OCI-LY7 (cell line): ENCODE measurements at regions of chr7 and their contacts with region 1.

Region 1: GRCh38 chr7:26090927-26091519 is 61.0 kb upstream of the NFE2L3 start:
- DNase-seq: peak; percentile 76
- H3K4me3 ChIP-seq: peak overlapping the region; percentile 9
- H3K27ac ChIP-seq: no peak overlapping the region
- H3K4me1 ChIP-seq: peaks cover 15% of the 10 kb centered on the region
- CTCF ChIP-seq: peak; percentile 98

Region 2: GRCh38 chr7:25512061-25512687 is 578.8 kb before region 1 on chr7:
- CTCF ChIA-PET with region 1: no interaction called
- POLR2A ChIA-PET with region 1: no interaction called
- intact Hi-C with region 1: no loop called
- DNase-seq: no peak
- H3K4me3 ChIP-seq: no peak overlapping the region
- H3K27ac ChIP-seq: no peak overlapping the region
- H3K4me1 ChIP-seq: no peaks in the 10 kb centered on the region
- CTCF ChIP-seq: no peak

Region 3: DNA sequence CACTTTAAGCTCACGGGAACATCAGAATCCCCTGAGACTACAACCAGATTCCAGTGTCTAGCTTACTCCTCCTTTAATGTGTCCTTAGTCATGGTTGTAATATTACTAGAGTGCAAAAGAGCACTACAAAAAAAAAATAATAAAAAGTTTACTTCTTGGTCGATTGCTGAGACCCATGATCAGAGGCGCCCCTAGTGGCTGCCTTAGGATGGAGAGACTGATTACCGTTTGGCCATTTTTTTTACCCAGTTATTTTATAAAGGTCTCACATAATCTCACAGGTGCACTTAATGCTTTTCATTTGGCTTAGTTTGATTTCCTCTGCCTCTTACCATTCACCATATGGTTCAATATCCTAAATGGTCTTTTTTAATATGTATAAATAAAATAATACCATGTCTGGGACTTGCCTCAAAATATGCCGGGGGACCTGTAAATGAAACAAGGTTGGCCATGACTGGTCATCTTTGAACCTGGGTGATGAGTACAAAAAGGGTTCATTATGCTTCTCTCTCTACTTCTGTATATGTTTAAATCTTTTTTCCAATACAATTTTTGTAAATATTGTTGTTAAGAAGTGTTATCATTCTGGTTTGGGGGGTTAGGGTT is 270.5 kb before region 1 on chr7:
- CTCF ChIA-PET with region 1: no interaction called
- POLR2A ChIA-PET with region 1: no interaction called
- intact Hi-C with region 1: no loop called
- DNase-seq: peak; percentile 64
- H3K4me3 ChIP-seq: peak overlapping the region; percentile 37
- H3K27ac ChIP-seq: peak overlapping the region; percentile 83
- H3K4me1 ChIP-seq: peaks cover 68% of the 10 kb centered on the region
- CTCF ChIP-seq: peak; percentile 98

Region 4: GRCh38 chr7:26151953-26152781 is 61.1 kb after region 1 on chr7 and contains the start of gene NFE2L3:
- CTCF ChIA-PET with region 1: no interaction called
- POLR2A ChIA-PET with region 1: interaction called, 6 read pairs
- intact Hi-C with region 1: loop called (anchors 2 kb)
- DNase-seq: peak; percentile 92
- H3K4me3 ChIP-seq: peak within 1 kb of the TSS; percentile 73
- H3K27ac ChIP-seq: peak within 1 kb of the TSS; percentile 30
- H3K4me1 ChIP-seq: peaks cover 44% of the 10 kb centered on the region
- CTCF ChIP-seq: 0 out of 2 replicates have a peak, but pooled peaks have one; percentile 18
- total RNA-seq, gene NFE2L3: 10.7 and 13.3 TPM in 2 replicates

Region 5: DNA sequence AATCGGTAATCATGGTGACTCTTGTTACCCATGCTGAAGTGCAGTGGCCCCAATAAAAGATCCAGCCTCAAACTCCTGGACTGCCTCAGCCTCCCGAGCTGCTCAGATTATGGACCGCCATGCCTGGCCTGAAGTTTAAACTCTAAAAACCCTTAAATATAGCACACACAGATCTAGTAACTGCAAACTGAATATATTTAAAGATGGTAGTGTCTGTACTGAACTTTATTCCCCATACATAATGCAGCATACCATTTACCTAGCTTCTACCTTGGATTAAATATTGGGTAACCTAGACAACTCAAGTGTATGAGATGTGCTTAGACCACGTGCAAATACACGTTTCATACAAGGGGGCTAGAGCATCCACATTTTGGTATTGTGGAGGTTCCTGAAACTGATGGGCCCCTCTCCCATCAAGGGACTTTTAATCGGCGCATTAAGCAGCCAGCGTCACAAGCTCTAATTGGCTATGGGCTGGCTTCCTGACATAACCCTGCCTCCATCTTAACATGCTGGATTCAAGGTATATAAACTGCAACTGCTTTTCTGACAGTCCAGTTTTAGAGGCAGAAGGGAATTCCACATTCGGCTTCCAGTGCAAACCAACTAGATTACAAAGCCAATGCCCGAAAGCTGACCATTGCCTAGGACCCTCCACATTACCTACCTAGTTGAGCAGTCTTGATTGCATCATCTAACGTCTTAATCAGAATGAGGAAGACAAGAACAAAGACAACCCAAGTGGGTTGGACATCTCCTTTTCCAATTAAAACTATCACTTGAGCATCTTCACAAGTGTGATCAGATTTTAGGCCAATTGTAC is 96.6 kb after region 1 on chr7:
- CTCF ChIA-PET with region 1: no interaction called
- POLR2A ChIA-PET with region 1: interaction called, 11 read pairs
- intact Hi-C with region 1: loop called (anchors 5 kb)
- DNase-seq: peak; percentile 43
- H3K4me3 ChIP-seq: no peak overlapping the region
- H3K27ac ChIP-seq: peak overlapping the region; percentile 60
- H3K4me1 ChIP-seq: peaks cover 26% of the 10 kb centered on the region
- CTCF ChIP-seq: no peak

Region 6: DNA sequence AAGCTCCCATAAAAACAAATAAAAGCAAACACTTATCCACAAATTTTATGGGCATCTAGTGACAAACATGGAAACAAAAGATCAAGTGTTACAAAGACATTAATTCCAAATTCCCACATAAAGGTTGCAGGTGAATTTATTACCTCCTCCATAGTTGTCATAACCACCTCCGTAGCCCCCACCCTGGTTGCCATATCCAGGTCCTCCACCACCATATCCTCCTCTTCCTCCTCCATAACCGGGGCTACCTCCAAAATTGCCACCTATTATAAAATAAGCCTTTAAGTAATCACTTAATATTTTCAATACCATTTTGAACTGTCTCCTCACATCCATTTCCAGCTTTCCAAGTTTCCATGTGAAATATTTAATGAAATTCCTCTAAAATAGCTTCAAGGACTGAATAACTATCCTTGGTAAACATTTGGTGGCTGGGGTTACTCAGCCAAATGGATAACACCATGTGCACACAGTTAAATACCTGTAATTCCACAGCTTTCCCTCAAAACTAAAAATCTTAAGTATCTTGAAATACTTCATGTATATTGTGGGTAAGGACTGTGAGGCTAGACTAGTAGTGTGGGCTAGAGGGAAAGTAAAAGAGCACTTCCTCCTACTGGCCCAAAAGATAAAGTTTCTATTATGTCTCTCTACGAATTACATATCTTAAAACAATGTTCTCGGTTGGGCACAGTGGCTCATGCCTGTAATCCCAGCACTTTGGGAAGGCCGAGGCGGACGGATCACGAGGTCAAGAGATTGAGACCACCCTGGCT is 102.6 kb after region 1 on chr7:
- CTCF ChIA-PET with region 1: interaction called, 3 read pairs
- POLR2A ChIA-PET with region 1: interaction called, 11 read pairs
- intact Hi-C with region 1: loop called (anchors 2 kb)
- DNase-seq: no peak
- H3K4me3 ChIP-seq: no peak overlapping the region
- H3K27ac ChIP-seq: no peak overlapping the region
- H3K4me1 ChIP-seq: peaks cover 63% of the 10 kb centered on the region
- CTCF ChIP-seq: no peak

Region 7: GRCh38 chr7:26291699-26292538 is 200.9 kb after region 1 on chr7 and contains the start of gene SNX10:
- CTCF ChIA-PET with region 1: no interaction called
- POLR2A ChIA-PET with region 1: interaction called, 3 read pairs
- intact Hi-C with region 1: loop called (anchors 5 kb)
- DNase-seq: peak; percentile 91
- H3K4me3 ChIP-seq: peak within 1 kb of the TSS; percentile 99
- H3K27ac ChIP-seq: peak within 1 kb of the TSS; percentile 74
- H3K4me1 ChIP-seq: peaks cover 37% of the 10 kb centered on the region
- CTCF ChIP-seq: peak; percentile 75
- total RNA-seq, gene SNX10: 14.3 and 14.5 TPM in 2 replicates

Region 8: DNA sequence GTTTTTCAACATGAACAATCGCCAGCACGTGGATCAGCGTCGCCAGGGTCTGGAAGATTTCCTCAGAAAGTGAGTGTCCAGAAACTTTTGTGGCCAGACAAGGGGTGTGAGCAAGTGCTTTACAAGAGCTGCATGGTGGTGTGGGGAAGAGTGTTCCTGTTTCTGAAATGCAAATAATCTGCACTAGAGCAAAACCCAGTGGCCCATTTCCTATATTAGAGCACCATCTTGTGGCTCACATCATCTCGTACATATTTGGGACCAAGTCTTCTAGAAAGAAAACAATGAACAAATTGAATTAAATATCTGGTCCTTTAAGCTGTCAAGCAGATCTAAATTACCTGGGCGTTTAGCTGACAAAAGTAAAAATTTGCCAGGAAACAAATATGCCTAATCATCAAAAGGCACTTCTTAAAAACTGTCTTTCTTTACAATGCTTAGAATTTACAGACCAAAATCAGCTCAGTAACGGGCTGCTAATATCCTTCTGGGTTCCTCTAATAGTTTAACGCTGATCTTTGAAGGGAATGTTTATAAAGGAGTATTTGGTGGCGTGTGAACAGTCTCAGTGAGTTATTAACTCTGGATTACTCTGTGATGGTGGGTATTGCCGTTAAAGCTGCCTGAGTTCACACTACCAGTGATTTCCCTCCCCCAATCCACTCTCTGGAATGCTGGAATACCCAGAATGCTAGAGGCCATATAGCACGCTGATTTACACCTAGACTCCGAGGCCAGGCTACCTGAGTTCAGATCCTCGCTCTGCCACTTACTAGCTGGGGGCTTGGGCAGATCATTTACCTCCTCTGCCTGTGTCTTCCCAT is 274.3 kb after region 1 on chr7:
- CTCF ChIA-PET with region 1: interaction called, 3 read pairs
- POLR2A ChIA-PET with region 1: interaction called, 5 read pairs
- intact Hi-C with region 1: loop called (anchors 1 kb)
- DNase-seq: peak; percentile 89
- H3K4me3 ChIP-seq: no peak overlapping the region
- H3K27ac ChIP-seq: peak overlapping the region; percentile 29
- H3K4me1 ChIP-seq: peaks cover 21% of the 10 kb centered on the region
- CTCF ChIP-seq: peak; percentile 93

Region 9: DNA sequence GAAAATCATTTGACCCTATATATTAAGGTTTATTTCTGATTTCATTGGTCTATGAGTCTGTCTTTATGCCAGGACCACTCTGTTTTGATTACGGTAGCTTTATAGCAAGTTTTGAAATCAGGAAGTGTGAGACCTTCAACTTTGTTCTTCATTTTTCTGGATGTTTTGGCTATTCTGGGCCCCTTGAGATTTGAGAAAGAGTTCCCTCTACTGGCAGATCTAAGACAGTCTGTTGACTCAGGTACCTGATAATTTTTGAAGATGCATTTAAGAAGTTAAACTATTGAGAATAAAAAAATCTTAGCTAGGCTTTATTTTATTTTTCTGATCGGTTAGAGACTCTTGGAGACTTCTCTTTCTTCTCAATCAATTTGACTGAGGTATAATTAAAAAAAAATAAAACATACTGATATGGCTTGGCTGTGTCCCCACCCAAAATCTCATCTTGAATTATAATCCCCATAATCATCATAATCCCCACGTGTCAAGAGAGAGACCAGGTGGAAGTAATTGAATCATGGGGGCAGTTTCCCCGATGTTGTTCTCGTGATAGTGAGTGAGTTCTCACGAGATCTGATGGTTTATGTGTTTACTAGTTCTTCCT is 409.8 kb after region 1 on chr7:
- CTCF ChIA-PET with region 1: no interaction called
- POLR2A ChIA-PET with region 1: no interaction called
- intact Hi-C with region 1: loop called (anchors 10 kb)
- DNase-seq: peak; percentile 72
- H3K4me3 ChIP-seq: no peak overlapping the region
- H3K27ac ChIP-seq: no peak overlapping the region
- H3K4me1 ChIP-seq: no peaks in the 10 kb centered on the region
- CTCF ChIP-seq: peak; percentile 90